ENCODE measurements at regions of chr14 and their contacts with region 1.

Region 1: GRCh38 chr14:94363151-94363624 is 25.2 kb downstream of the SERPINA1 start:
- DNase-seq: no peak
- H3K4me3 ChIP-seq: no peak overlapping the region
- H3K27ac ChIP-seq: no peak overlapping the region
- H3K4me1 ChIP-seq: no peaks in the 10 kb centered on the region
- H3K27me3 ChIP-seq: no peaks in the 10 kb centered on the region
- CTCF ChIP-seq: no peak
- EP300 ChIP-seq: no peak
- POLR2A ChIP-seq: no peak

Region 2: DNA sequence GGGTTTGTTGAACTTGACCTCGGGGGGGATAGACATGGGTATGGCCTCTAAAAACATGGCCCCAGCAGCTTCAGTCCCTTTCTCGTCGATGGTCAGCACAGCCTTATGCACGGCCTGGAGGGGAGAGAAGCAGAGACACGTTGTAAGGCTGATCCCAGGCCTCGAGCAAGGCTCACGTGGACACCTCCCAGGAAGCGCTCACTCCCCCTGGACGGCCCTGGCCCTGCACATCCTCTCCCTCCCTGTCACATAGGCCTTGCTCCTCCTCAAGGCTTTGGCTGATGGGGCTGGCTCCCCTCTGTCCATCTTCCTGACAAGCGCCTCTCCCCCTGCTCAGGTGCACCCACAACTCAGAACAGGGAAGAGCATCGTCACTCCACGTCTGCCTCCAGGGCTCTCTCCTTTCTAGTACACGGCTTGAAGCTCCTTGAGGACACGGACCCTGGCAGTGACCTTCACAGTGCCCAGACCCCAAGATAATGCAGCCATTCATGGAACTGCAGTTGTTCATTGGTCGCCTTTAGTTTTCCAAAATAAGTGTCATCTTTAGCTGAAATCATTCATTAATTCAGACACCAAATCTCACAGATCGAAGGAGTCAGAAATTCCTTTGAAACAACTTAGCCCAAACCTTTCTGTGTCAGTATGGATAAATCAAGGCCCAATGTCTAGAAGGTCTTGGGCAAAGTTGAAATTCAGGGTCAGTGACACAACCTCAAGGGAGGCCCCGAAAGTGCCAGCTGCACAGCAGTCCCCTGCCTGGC is 15.5 kb after region 1 on chr14:
- in situ Hi-C with region 1: no loop called
- intact Hi-C with region 1: loop called (anchors 1 kb)
- DNase-seq: no peak
- H3K4me3 ChIP-seq: no peak overlapping the region
- H3K27ac ChIP-seq: no peak overlapping the region
- H3K4me1 ChIP-seq: no peaks in the 10 kb centered on the region
- H3K27me3 ChIP-seq: no peaks in the 10 kb centered on the region
- CTCF ChIP-seq: no peak
- EP300 ChIP-seq: no peak
- POLR2A ChIP-seq: no peak

Region 3: DNA sequence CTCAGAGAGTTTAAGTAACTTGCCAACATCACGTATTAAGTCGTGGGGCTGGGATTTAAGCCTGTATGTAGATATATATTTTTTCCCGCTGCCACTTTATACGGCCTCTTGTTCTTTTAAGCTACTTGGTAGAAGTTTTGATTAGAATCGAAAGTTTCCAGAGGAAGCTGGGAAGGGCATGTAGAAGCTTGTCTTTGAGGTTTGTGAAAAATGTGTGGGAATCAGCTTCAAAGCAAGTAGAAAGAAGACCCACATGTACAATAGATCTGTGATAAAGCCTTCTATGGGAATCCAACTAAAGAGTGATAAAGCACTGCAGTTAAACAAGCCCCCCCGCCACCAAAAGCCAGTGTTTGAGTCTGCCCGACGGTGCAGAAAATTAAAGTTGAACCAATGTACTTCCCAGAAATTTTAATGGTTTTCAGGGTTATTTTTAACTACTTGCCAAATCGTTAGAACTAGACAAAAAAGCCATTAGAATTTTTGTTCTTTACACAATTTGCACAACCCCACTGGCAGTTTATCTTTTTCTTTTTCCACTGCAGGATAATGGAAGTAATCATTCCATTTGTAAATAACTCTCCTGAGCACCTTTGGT is 63.9 kb after region 1 on chr14:
- in situ Hi-C with region 1: no loop called
- intact Hi-C with region 1: no loop called
- DNase-seq: no peak
- H3K4me3 ChIP-seq: no peak overlapping the region
- H3K27ac ChIP-seq: no peak overlapping the region
- H3K4me1 ChIP-seq: peaks cover 0 to 4% (median 0%) of the 10 kb centered on the region in 4 donors
- H3K27me3 ChIP-seq: peaks cover 22% of the 10 kb centered on the region
- CTCF ChIP-seq: no peak
- EP300 ChIP-seq: no peak
- POLR2A ChIP-seq: no peak

Region 4: DNA sequence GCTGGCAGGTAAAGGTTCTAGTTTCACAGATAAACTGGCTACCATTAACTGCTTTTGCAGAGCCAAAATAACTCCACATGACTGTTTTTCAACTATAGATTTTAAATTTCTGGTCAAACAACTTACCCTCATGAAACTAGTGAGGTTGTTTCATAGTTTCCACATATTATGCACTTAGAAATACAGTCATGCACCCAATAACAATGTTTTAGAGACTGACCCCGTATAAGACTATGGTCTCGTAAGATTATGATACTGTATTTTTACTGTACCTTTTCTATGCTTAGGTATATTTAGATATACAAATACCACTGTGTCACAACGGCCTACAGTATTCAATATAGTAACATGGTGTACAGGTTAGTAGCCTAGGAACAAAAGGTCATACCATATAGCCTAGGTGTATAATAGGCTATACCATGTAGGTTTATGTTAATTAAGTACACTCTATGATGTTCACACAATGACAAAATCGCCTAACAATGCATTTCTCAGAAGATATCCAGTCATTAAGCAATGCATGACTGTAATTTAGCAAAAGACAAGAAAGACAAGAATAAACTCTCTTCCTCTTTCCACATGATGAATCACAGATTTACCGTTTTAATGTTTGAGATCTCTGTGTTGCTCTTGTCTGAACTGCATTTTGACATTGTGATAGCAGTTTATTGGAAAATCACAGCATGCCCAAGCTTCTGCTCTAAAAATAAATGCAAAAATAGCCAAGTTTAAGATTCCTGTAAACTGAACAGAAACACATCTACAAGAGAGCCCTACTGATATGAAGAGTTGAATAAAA is 777.1 kb after region 1 on chr14:
- in situ Hi-C with region 1: no loop called
- intact Hi-C with region 1: no loop called
- DNase-seq: no peak
- H3K4me3 ChIP-seq: no peak overlapping the region
- H3K27ac ChIP-seq: peak overlapping the region in 3 of 4 donors; percentile 13 to 32 (median 14)
- H3K4me1 ChIP-seq: peaks cover 13 to 84% (median 61%) of the 10 kb centered on the region in 4 donors
- H3K27me3 ChIP-seq: no peaks in the 10 kb centered on the region
- CTCF ChIP-seq: no peak
- EP300 ChIP-seq: no peak
- POLR2A ChIP-seq: no peak

Measured in transverse colon (tissue), 4 donors.